Right ventricle myocardium superior (tissue), 1 donor: ENCODE measurements at regions of chr13 and their contacts with region 1.

Region 1: DNA sequence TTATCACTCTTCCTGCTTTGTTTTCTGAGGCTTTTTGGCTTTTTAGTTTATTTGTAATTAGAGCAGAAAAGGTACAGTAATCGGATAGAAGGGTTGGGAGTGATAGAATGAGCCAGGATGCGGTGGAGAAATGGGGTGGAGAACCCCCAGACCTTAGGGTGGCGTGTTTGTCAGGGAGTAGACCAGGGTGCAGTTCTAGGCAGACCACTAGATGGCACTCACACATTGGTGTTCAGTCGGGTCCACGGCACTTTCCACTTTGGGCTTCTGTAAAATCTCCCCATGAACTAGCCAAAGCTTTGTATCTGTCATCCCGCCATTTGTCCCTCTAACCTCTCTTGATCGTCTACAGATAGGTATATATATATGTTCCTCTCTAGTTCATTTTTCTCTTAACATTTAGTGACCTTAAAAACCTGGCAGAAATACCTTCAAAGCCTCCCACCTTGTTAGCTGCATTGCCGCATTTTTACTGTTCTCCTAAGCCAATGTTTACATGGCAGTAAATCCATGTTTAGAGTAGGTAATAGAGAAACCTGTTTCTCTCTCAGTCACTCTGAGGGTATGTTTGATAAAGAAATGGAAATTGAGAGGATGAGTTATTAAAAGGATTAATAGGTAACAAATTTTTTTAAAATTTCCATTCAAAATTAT is 154.9 kb downstream of the TM9SF2 start:
- DNase-seq: peak; percentile 64
- ATAC-seq: peak; percentile 76

Region 2: GRCh38 chr13:99821741-99822140 is 165.5 kb after region 1 on chr13:
- intact Hi-C with region 1: no loop called
- DNase-seq: no peak
- ATAC-seq: no peak

Region 3: DNA sequence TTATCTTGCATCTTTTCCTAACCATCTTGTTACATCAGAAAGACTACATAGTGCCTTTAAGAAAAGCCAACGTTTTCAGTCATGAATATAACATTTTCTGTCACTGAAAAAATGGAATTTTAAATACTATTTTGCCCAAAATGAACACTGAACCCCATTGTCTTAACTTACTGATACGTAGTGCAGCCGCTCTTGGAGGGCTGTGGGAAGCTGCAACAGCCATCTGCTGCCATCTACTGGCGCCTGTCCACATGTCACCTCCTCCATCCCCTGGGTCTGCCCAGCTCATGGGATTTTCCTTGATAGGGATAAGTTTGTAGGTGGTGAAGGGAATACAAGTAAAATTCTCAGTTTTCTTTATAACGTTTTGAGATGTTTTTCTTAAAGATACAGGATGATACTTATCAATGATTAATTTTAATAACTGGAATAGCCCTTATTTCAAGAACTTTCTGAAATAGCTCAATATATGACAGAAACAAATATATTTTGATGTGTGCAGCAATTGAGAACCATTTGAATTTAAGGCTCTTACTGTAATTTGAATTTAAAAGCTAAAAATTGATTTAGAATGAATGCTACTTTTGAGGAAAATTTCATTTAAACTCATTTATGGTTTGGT is 858.7 kb after region 1 on chr13:
- intact Hi-C with region 1: loop called (anchors 5 kb)
- DNase-seq: peak; percentile 86
- ATAC-seq: peak; percentile 94